Naive thymus-derived CD4-positive, alpha-beta T cell (primary cell): ENCODE measurements at regions of chr21 and their contacts with region 1.

Region 1: DNA sequence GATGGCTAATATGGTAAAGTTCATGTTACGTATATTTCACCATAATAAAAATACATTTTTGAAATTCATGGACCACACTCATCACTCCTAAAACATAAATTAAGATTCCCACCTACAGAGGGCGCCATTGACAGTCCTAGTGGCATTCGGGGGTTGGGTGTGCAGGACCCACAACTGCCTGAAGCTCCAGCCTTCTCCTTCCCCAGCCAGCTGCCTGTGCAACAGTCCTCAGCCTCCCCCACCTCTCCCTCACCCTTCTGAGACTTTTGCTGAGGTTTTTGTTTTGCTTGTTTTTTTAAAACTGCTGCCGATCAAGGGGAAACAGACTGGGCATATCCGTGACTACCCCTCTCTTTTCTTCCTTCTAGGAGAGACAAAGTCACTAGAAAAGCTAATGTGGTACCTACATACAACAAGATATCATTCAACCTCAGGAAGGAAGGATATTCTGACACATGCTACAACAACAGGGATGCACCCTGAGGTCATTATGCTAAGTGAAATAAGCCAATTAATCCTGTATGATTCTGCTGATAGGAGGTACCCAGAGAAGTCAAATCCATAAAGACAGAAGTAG is 9.2 kb upstream of the EVA1C start:
- DNase-seq: peak in 7 of 9 donors; percentile 43 to 54 (median 50)
- ATAC-seq: peak; percentile 87
- H3K4me3 ChIP-seq: no peak overlapping the region
- H3K4me3 Mint-ChIP-seq: no peak overlapping the region
- H3K27ac ChIP-seq: no peak overlapping the region
- H3K27ac Mint-ChIP-seq: no peak overlapping the region
- H3K4me1 ChIP-seq: peaks cover 0 to 4% of the 10 kb centered on the region in 2 donors
- H3K4me1 Mint-ChIP-seq: peaks cover 0 to 17% (median 0%) of the 10 kb centered on the region in 7 donors
- H3K27me3 ChIP-seq: no peaks in the 10 kb centered on the region
- H3K27me3 Mint-ChIP-seq: peaks cover 0 to 17% (median 12%) of the 10 kb centered on the region in 5 donors

Region 2: DNA sequence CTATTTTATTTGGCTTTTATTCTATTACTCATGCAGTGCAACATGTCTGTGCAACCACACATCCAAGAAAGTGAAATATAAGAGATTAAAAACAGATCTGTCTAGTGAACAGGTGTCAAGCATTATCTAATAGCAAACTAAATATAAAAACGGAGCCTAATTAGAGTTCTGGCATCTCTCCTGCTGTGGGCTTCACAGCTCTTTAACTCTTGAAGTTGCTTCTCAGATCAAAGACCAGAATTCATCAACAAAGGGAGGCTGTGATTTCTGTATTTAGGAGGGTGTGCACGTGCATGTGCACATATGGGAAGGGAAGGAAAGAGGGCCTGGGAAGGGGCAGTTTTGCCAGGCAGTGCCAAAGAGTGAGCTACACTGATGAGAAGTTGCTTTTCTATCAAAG is 205.4 kb before region 1 on chr21:
- CTCF ChIA-PET with region 1: no interaction called
- POLR2A ChIA-PET with region 1: no interaction called
- intact Hi-C with region 1: no loop called
- DNase-seq: no peak
- ATAC-seq: no peak
- H3K4me3 ChIP-seq: no peak overlapping the region
- H3K4me3 Mint-ChIP-seq: no peak overlapping the region
- H3K27ac ChIP-seq: no peak overlapping the region
- H3K27ac Mint-ChIP-seq: no peak overlapping the region
- H3K4me1 ChIP-seq: no peaks in the 10 kb centered on the region
- H3K4me1 Mint-ChIP-seq: peaks cover 0 to 1% (median 0%) of the 10 kb centered on the region in 7 donors
- H3K27me3 ChIP-seq: no peaks in the 10 kb centered on the region
- H3K27me3 Mint-ChIP-seq: peaks cover 0 to 2% (median 0%) of the 10 kb centered on the region in 5 donors

Region 3: DNA sequence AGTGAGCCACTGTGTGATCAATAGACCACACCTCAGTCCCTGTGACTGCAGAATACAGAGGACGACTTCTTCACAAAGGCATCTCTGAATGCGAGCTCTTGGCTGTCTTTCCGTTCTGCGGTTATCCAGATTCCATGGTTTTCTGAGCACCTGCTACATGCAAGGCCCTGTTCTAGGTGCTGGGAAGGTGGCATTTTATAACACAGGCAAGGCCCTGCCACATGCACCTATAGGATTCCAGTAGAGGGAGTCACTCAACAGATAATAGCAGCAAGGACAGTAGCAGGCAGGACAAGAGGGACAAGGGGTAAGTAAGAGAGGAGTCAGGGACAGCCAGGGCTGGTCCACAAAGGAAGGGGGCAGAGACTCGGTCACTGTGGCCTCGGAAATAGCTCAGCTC is 19.5 kb before region 1 on chr21:
- CTCF ChIA-PET with region 1: no interaction called
- POLR2A ChIA-PET with region 1: no interaction called
- intact Hi-C with region 1: no loop called
- DNase-seq: no peak
- ATAC-seq: no peak
- H3K4me3 ChIP-seq: no peak overlapping the region
- H3K4me3 Mint-ChIP-seq: no peak overlapping the region
- H3K27ac ChIP-seq: no peak overlapping the region
- H3K27ac Mint-ChIP-seq: no peak overlapping the region
- H3K4me1 ChIP-seq: no peaks in the 10 kb centered on the region
- H3K4me1 Mint-ChIP-seq: peaks cover 12 to 29% (median 24%) of the 10 kb centered on the region in 7 donors
- H3K27me3 ChIP-seq: no peaks in the 10 kb centered on the region
- H3K27me3 Mint-ChIP-seq: no peaks in the 10 kb centered on the region

Region 4: DNA sequence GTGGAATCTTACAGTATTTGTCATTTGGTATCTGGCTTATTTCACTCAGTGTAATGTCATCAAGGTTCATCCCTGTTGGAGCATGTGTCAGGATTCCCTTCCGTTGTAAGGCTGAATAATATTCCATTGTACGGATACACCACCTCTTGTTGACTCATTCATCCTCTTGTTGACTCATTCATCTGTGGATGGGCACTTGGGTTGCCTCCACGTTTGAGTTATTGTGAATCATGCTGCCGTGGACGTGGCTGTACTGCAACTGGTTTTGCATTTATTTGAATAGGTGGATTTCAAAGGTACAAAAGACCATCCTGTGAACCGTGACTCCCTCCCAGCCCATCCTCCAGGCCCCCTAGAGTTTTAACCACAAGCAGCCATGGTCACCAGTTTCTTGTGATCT is 193.9 kb after region 1 on chr21:
- CTCF ChIA-PET with region 1: interaction called, 10 read pairs
- POLR2A ChIA-PET with region 1: no interaction called
- intact Hi-C with region 1: loop called (anchors 1 kb)
- DNase-seq: no peak
- ATAC-seq: no peak
- H3K4me3 ChIP-seq: no peak overlapping the region
- H3K4me3 Mint-ChIP-seq: no peak overlapping the region
- H3K27ac ChIP-seq: no peak overlapping the region
- H3K27ac Mint-ChIP-seq: peak overlapping the region in 1 of 9 donors; percentile 8
- H3K4me1 ChIP-seq: no peaks in the 10 kb centered on the region
- H3K4me1 Mint-ChIP-seq: peaks cover 0 to 4% (median 0%) of the 10 kb centered on the region in 7 donors
- H3K27me3 ChIP-seq: no peaks in the 10 kb centered on the region
- H3K27me3 Mint-ChIP-seq: no peaks in the 10 kb centered on the region